Prostate gland (tissue), 2 donors: ENCODE measurements at regions of chr4 and their contacts with region 1.

Region 1: DNA sequence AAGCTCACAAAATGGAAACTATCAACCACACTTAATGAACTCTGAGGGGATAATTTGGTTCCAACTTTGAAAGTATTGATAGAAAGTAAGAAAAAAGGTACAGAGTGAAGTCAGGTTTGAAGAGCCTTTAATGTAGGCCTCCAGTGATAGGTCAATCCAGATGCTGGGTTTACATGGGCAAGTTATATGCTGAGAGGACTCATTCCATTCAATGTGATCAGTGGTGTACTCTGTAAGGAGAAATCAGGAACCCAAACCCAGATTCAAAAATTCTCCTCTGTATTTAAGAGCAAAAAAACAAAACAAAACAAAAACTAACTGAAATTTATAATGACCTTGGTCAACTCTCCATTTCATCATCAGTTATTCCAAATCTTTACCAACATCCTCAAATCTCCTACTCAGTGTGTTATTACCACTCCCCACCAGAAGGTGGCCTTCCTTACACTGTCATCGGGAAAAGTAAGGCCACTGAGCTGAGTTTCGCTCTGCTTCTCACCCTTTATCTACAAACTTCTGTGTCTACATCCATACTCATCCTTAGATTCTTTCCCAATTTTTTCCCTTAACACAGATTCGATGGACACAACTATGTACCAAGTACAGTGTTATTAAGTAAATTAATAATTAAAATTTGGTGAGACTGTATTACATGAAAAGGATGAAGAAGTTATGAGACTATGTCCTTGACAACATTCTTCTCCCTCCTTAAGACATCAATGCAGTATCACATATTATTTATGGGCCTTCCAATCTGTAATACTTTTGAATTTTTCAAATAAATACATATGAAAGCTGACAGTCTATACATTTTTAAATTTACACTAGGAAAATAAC is 88.3 kb downstream of the ZAR1 start:
- DNase-seq: peak; percentile 71
- H3K4me3 ChIP-seq: no peak overlapping the region
- H3K27ac ChIP-seq: no peak overlapping the region
- H3K4me1 ChIP-seq: no peaks in the 10 kb centered on the region
- H3K27me3 ChIP-seq: no peaks in the 10 kb centered on the region
- CTCF ChIP-seq: peak; percentile 66 to 87 (median 80)
- POLR2A ChIP-seq: no peak

Region 2: GRCh38 chr4:48315728-48316630 is 262.4 kb before region 1 on chr4:
- intact Hi-C with region 1: no loop called
- DNase-seq: peak; percentile 17
- H3K4me3 ChIP-seq: no peak overlapping the region
- H3K27ac ChIP-seq: no peak overlapping the region
- H3K4me1 ChIP-seq: no peaks in the 10 kb centered on the region
- H3K27me3 ChIP-seq: no peaks in the 10 kb centered on the region
- CTCF ChIP-seq: peak; percentile 20 to 63 (median 55)
- POLR2A ChIP-seq: no peak

Region 3: GRCh38 chr4:48499551-48500066 is 78.7 kb before region 1 on chr4:
- intact Hi-C with region 1: no loop called
- DNase-seq: no peak
- H3K4me3 ChIP-seq: no peak overlapping the region
- H3K27ac ChIP-seq: no peak overlapping the region
- H3K4me1 ChIP-seq: no peaks in the 10 kb centered on the region
- H3K27me3 ChIP-seq: no peaks in the 10 kb centered on the region
- CTCF ChIP-seq: no peak
- POLR2A ChIP-seq: no peak

Region 4: GRCh38 chr4:48518143-48518542 is 60.2 kb before region 1 on chr4:
- intact Hi-C with region 1: no loop called
- DNase-seq: no peak
- H3K4me3 ChIP-seq: no peak overlapping the region
- H3K27ac ChIP-seq: no peak overlapping the region
- H3K4me1 ChIP-seq: no peaks in the 10 kb centered on the region
- H3K27me3 ChIP-seq: no peaks in the 10 kb centered on the region
- CTCF ChIP-seq: no peak
- POLR2A ChIP-seq: no peak

Region 5: DNA sequence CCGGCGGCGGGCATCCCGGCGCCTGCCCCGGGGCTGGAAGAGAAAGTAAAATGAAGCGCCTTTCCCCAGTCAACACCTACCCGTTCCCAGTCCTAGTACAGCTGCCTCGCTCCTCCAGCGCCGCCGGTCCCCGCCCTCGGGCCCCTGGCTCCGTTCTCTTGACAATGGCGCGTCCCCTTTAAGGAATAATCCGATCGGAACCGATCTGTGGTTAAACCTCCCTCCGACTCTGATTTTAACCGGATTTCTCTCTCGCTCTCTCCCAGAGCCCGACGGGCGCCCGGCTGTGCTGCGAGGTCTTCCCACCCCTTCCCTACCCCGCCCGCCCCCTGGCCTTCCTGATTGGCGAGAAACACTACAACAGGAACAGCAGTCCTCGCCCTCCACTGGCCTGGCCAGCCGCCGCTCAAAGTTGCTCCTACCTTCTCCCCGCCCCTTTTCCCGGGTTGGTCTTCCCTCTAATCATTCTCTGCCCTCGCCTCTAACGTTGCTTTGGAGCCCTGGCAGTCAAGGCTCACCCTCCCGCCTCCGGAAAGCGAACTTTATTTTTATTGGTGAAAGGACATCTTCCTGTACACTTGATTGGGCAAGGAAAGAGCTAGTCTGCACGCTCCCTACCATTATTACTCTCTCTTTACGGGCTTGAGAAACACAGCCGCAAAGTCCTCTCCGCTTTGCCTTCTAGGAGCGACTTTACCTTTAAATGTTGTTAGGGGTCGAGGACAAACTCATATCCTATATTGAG is 201.8 kb after region 1 on chr4 and contains the start of gene FRYL:
- intact Hi-C with region 1: loop called (anchors 5 kb)
- DNase-seq: peak; percentile 100
- H3K4me3 ChIP-seq: peak within 1 kb of the TSS; percentile 88 to 98
- H3K27ac ChIP-seq: peak within 1 kb of the TSS; percentile 94 to 95
- H3K4me1 ChIP-seq: no peaks in the 10 kb centered on the region
- H3K27me3 ChIP-seq: no peaks in the 10 kb centered on the region
- CTCF ChIP-seq: no peak
- POLR2A ChIP-seq: peak; percentile 50
- total RNA-seq, gene FRYL: 40.0 to 47.6 TPM

Region 6: GRCh38 chr4:48963042-48963679 is 384.8 kb after region 1 on chr4:
- intact Hi-C with region 1: loop called (anchors 2 kb)
- DNase-seq: peak; percentile 62
- H3K4me3 ChIP-seq: no peak overlapping the region
- H3K27ac ChIP-seq: no peak overlapping the region
- H3K4me1 ChIP-seq: no peaks in the 10 kb centered on the region
- H3K27me3 ChIP-seq: no peaks in the 10 kb centered on the region
- CTCF ChIP-seq: peak; percentile 83 to 93 (median 87)
- POLR2A ChIP-seq: no peak